MCF 10A (cell line): ENCODE measurements at regions of chr19 and their contacts with region 1.

Region 1: GRCh38 chr19:37906869-37907734 is at the start of gene SIPA1L3:
- DNase-seq: peak; percentile 97
- H3K4me3 Mint-ChIP-seq: peak within 1 kb of the TSS; percentile 76
- H3K27ac Mint-ChIP-seq: no peak within 1 kb of the TSS
- H3K4me1 Mint-ChIP-seq: peaks cover 13% of the 10 kb centered on the region
- H3K27me3 Mint-ChIP-seq: no peaks in the 10 kb centered on the region
- CTCF ChIP-seq: no peak
- total RNA-seq, gene SIPA1L3: 36.0 and 36.9 TPM in 2 replicates

Region 2: GRCh38 chr19:37864501-37864900 is 42.6 kb before region 1 on chr19:
- CTCF ChIA-PET with region 1: no interaction called
- POLR2A ChIA-PET with region 1: no interaction called
- intact Hi-C with region 1: no loop called
- DNase-seq: no peak
- H3K4me3 Mint-ChIP-seq: no peak overlapping the region
- H3K27ac Mint-ChIP-seq: no peak overlapping the region
- H3K4me1 Mint-ChIP-seq: peaks cover 15% of the 10 kb centered on the region
- H3K27me3 Mint-ChIP-seq: no peaks in the 10 kb centered on the region
- CTCF ChIP-seq: no peak

Region 3: DNA sequence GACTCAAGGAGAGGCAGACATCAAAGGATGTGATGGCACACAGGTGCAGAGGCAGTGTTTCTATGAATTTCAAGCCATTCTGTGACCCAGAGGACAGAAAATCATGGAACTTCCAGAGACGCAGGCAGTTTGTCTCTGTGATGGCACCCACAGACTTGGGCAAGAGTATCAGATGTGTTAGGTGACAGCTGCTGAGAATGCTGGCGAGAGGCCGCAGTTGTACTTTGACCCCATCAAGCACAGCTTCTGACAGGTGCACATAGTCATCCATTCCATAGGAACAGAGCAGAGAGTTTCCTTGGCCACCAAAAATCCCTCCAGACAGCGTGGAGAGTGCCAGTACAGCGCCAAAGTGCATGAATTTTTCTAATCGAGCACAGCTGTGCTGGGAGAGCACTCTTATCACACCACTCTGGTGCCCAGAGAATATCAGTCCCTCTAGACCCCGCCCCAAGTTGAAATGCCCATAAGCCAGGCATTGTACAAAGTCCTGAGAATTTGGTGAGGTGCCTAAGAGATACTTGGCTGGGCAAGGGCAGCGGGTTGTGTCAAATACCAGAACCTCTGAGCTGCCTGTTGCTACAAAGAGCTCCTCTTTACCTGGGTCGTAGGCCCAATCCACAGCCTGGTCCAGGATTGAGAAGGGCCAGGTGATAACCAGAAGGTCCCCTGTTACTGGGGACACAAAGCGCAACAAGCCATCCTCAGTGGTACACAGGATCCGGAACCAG is 13.1 kb before region 1 on chr19:
- CTCF ChIA-PET with region 1: interaction called, 18 read pairs
- POLR2A ChIA-PET with region 1: interaction called, 4 read pairs
- intact Hi-C with region 1: no loop called
- DNase-seq: no peak
- H3K4me3 Mint-ChIP-seq: no peak overlapping the region
- H3K27ac Mint-ChIP-seq: no peak overlapping the region
- H3K4me1 Mint-ChIP-seq: no peaks in the 10 kb centered on the region
- H3K27me3 Mint-ChIP-seq: peaks cover 15% of the 10 kb centered on the region
- CTCF ChIP-seq: no peak

Region 4: DNA sequence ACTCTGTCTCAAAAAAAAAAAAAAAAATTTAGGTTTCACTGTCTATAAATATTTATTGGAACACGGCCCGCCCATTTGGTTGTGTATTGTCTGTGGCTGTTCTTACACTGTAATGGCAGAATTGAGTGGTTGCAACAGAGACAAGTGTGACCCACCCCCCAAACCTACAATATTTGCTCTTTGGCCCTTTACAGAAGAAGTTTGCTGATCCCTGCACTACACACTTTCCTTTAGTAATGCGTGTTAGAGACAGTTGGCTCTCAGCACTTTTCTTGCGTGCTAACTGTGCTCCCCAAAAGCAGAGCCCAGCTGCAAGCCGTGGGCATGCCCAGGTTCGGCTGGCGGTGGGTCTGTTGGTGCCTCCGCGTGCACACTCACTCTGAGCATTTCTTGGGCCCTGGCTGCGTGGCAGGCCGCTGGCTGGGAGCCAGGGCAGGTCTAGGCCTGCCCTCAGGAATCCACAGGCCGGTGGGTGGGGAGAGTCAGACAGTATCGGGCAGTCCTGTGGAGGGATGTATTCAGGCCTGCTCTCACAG is 72.5 kb after region 1 on chr19:
- CTCF ChIA-PET with region 1: interaction called, 9 read pairs
- POLR2A ChIA-PET with region 1: interaction called, 11 read pairs
- intact Hi-C with region 1: no loop called
- DNase-seq: peak; percentile 90
- H3K4me3 Mint-ChIP-seq: peak overlapping the region; percentile 67
- H3K27ac Mint-ChIP-seq: peak overlapping the region; percentile 97
- H3K4me1 Mint-ChIP-seq: peaks cover 20% of the 10 kb centered on the region
- H3K27me3 Mint-ChIP-seq: no peaks in the 10 kb centered on the region
- CTCF ChIP-seq: no peak

Region 5: DNA sequence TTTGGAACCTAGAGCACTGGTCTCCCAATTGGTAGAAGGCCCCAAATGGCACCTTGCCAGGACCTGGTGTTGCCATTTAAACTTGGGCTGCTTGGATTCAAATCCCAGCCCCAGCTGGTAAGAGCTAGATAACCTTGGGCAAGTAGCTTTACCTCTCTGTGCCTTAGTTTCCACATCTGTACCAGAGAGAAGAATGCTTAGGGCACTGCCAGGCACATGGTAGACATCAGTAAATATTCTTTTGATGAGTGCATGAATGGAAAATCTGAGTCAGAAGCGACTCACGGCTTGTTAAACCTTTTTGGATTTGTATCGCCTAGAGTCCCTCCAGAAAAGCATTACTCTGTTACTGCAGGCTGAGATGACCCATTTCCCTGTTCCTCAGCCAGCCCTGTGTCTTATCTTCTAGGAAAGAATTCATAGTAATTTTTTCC is 90.8 kb after region 1 on chr19:
- CTCF ChIA-PET with region 1: interaction called, 51 read pairs
- POLR2A ChIA-PET with region 1: interaction called, 51 read pairs
- intact Hi-C with region 1: no loop called
- DNase-seq: peak; percentile 77
- H3K4me3 Mint-ChIP-seq: no peak overlapping the region
- H3K27ac Mint-ChIP-seq: peak overlapping the region; percentile 61
- H3K4me1 Mint-ChIP-seq: no peaks in the 10 kb centered on the region
- H3K27me3 Mint-ChIP-seq: no peaks in the 10 kb centered on the region
- CTCF ChIP-seq: no peak

Region 6: GRCh38 chr19:38044267-38045111 is 137.4 kb after region 1 on chr19:
- CTCF ChIA-PET with region 1: interaction called, 4 read pairs
- POLR2A ChIA-PET with region 1: interaction called, 3 read pairs
- intact Hi-C with region 1: loop called (anchors 1 kb)
- DNase-seq: peak; percentile 9
- H3K4me3 Mint-ChIP-seq: no peak overlapping the region
- H3K27ac Mint-ChIP-seq: no peak overlapping the region
- H3K4me1 Mint-ChIP-seq: no peaks in the 10 kb centered on the region
- H3K27me3 Mint-ChIP-seq: no peaks in the 10 kb centered on the region
- CTCF ChIP-seq: no peak

Region 7: GRCh38 chr19:38095411-38096308 is 188.6 kb after region 1 on chr19:
- CTCF ChIA-PET with region 1: interaction called, 24 read pairs
- POLR2A ChIA-PET with region 1: interaction called, 6 read pairs
- intact Hi-C with region 1: loop called (anchors 1 kb)
- DNase-seq: peak; percentile 77
- H3K4me3 Mint-ChIP-seq: no peak overlapping the region
- H3K27ac Mint-ChIP-seq: no peak overlapping the region
- H3K4me1 Mint-ChIP-seq: no peaks in the 10 kb centered on the region
- H3K27me3 Mint-ChIP-seq: no peaks in the 10 kb centered on the region
- CTCF ChIP-seq: peak; percentile 48

Region 8: GRCh38 chr19:38245826-38246498 is 338.9 kb after region 1 on chr19:
- CTCF ChIA-PET with region 1: interaction called, 15 read pairs
- POLR2A ChIA-PET with region 1: no interaction called
- intact Hi-C with region 1: no loop called
- DNase-seq: no peak
- H3K4me3 Mint-ChIP-seq: no peak overlapping the region
- H3K27ac Mint-ChIP-seq: no peak overlapping the region
- H3K4me1 Mint-ChIP-seq: peaks cover 16% of the 10 kb centered on the region
- H3K27me3 Mint-ChIP-seq: no peaks in the 10 kb centered on the region
- CTCF ChIP-seq: no peak